Pancreas (tissue), 10 donors: ENCODE measurements at regions of chr5 and their contacts with region 1.

Region 1: GRCh38 chr5:140564196-140565023 is at the starts of genes APBB3 and SLC35A4:
- DNase-seq: peak; percentile 92 to 97 (median 96)
- ATAC-seq: peak; percentile 92 to 96 (median 92)
- H3K4me3 ChIP-seq: peak within 1 kb of the TSS; percentile 33 to 66 (median 54)
- H3K27ac ChIP-seq: peak within 1 kb of the TSS; percentile 90 to 93 (median 92)
- H3K4me1 ChIP-seq: peaks cover 4 to 11% (median 10%) of the 10 kb centered on the region in 3 donors
- H3K27me3 ChIP-seq: no peaks in the 10 kb centered on the region
- CTCF ChIP-seq: no peak
- total RNA-seq, gene APBB3: 8.1 to 20.0 (median 12.7) TPM
- total RNA-seq, gene SLC35A4: 17.0 to 36.5 (median 26.4) TPM

Region 2: DNA sequence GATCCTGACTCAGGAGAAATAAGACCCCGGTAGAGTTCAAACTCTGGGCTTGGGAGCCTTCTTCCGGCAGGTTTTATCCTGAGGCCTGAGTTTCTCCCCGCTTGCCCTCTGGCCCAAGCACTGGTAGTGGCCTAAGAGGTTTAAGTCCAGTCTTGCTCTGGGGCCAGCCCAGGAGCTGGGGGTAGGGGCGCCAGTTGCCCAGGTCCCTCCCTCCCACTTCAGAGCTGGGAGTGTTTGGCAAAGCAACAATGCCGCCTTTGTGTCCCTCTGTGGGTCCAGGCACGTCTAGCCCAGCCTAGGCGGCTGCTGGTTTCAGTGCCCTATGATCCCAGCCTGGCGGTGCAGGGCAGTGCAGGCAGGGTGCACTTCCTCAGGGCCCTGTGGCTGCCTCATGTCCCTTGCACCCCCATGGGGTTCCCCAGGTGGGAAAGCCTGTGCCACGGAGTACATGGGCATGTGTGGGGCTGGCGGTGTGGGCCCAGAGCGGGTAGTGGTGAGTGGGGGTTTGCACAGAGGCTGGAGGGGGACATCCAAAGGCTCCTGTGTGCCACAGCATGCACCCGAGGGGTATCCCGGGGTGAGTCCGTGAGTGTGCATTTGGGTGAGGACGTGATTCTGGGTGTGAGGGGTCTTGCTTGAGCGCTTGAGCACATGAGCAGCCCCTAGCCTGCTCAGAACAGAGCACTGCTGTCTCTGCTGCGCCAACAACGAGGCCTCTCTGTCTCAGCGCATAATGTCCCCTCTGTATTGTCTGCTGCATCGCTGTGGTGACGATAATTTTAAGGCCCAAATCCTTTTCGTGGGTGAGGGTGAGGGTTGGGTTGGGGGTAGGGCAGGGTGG is 830.5 kb before region 1 on chr5:
- intact Hi-C with region 1: no loop called
- DNase-seq: peak in 5 of 6 donors; percentile 36 to 76 (median 54)
- ATAC-seq: peak; percentile 70 to 95 (median 88)
- H3K4me3 ChIP-seq: no peak overlapping the region
- H3K27ac ChIP-seq: peak overlapping the region in 3 of 4 donors; percentile 37 to 64 (median 42)
- H3K4me1 ChIP-seq: no peaks in the 10 kb centered on the region
- H3K27me3 ChIP-seq: no peaks in the 10 kb centered on the region
- CTCF ChIP-seq: no peak

Region 3: GRCh38 chr5:140639148-140639979 is 75.0 kb after region 1 on chr5 and contains the start of gene TMCO6:
- intact Hi-C with region 1: loop called in 1 of 3 experiments (anchors 10 kb)
- DNase-seq: peak; percentile 96 to 98 (median 98)
- ATAC-seq: peak; percentile 98 to 99 (median 98)
- H3K4me3 ChIP-seq: peak within 1 kb of the TSS; percentile 68 to 93 (median 76)
- H3K27ac ChIP-seq: peak within 1 kb of the TSS; percentile 60 to 79 (median 71)
- H3K4me1 ChIP-seq: peaks cover 0 to 7% (median 0%) of the 10 kb centered on the region in 3 donors
- H3K27me3 ChIP-seq: no peaks in the 10 kb centered on the region
- CTCF ChIP-seq: peak; percentile 35 to 63 (median 44)
- total RNA-seq, gene TMCO6: 5.5 to 12.3 (median 8.0) TPM